AG04450 (cell line): ENCODE measurements at regions of chr5 and their contacts with region 1.

Region 1: GRCh38 chr5:17132444-17133083 is 84.9 kb upstream of the BASP1 start:
- DNase-seq: no peak
- H3K4me3 ChIP-seq: no peak overlapping the region
- H3K27ac ChIP-seq: no peak overlapping the region
- H3K27me3 ChIP-seq: no peaks in the 10 kb centered on the region
- CTCF ChIP-seq: peak; percentile 68

Region 2: DNA sequence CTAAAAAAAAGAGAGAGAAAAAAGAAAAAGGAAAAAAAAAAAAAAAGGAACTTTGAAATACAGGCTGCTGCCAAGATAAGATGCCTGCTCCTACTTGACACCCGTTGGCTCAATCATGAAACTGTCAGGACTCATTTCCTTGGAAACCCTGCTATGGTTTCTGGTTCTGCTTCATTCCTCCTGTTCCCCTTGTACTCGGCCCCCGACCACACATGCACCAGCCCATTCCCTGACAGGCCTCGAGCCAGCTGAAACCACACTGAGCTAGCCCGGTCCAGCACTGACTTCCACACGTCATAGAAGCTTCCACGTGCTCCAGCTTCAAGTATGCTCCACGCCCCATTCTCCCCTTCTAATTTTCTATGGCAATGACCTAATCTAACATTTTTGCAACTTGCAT is 289.7 kb before region 1 on chr5:
- CTCF ChIA-PET with region 1: interaction called, 12 read pairs
- POLR2A ChIA-PET with region 1: no interaction called
- DNase-seq: no peak
- H3K4me3 ChIP-seq: no peak overlapping the region
- H3K27ac ChIP-seq: no peak overlapping the region
- H3K27me3 ChIP-seq: no peaks in the 10 kb centered on the region
- CTCF ChIP-seq: no peak

Region 3: DNA sequence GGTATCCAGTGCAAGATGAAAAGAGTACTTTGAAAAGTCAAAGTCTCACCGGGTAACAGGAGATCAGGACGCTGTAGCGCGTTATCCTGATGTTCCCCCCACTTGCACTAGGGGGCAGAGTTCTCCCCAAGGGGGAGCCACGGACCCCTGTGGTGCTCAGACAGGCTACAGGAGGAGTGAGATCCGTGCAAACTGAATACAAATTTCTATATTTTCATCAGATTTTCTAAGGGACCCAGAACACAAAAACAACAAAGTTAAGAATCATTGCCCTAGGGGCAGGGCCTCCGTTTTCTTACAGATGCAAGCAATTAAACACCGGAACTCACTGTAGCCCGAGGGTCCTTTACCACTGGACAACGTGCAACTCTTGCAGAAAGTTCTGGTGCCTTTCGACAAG is 198.4 kb before region 1 on chr5:
- CTCF ChIA-PET with region 1: interaction called, 43 read pairs
- POLR2A ChIA-PET with region 1: no interaction called
- DNase-seq: peak; percentile 38
- H3K4me3 ChIP-seq: peak overlapping the region; percentile 85
- H3K27ac ChIP-seq: no peak overlapping the region
- H3K27me3 ChIP-seq: no peaks in the 10 kb centered on the region
- CTCF ChIP-seq: peak; percentile 99

Region 4: GRCh38 chr5:17118631-17119030 is 13.9 kb before region 1 on chr5:
- CTCF ChIA-PET with region 1: interaction called, 29 read pairs
- POLR2A ChIA-PET with region 1: interaction called, 3 read pairs
- DNase-seq: peak; percentile 59
- H3K4me3 ChIP-seq: no peak overlapping the region
- H3K27ac ChIP-seq: peak overlapping the region; percentile 50
- H3K27me3 ChIP-seq: no peaks in the 10 kb centered on the region
- CTCF ChIP-seq: no peak

Region 5: GRCh38 chr5:17151686-17152085 is 19.1 kb after region 1 on chr5:
- CTCF ChIA-PET with region 1: interaction called, 77 read pairs
- POLR2A ChIA-PET with region 1: interaction called, 3 read pairs
- DNase-seq: no peak
- H3K4me3 ChIP-seq: no peak overlapping the region
- H3K27ac ChIP-seq: no peak overlapping the region
- H3K27me3 ChIP-seq: no peaks in the 10 kb centered on the region
- CTCF ChIP-seq: no peak

Region 6: GRCh38 chr5:17180957-17181723 is 48.6 kb after region 1 on chr5:
- CTCF ChIA-PET with region 1: interaction called, 13 read pairs
- POLR2A ChIA-PET with region 1: interaction called, 3 read pairs
- DNase-seq: peak; percentile 96
- H3K4me3 ChIP-seq: no peak overlapping the region
- H3K27ac ChIP-seq: peak overlapping the region; percentile 96
- H3K27me3 ChIP-seq: no peaks in the 10 kb centered on the region
- CTCF ChIP-seq: no peak